GM12878 (cell line): ENCODE measurements at regions of chr12 and their contacts with region 1.

Region 1: DNA sequence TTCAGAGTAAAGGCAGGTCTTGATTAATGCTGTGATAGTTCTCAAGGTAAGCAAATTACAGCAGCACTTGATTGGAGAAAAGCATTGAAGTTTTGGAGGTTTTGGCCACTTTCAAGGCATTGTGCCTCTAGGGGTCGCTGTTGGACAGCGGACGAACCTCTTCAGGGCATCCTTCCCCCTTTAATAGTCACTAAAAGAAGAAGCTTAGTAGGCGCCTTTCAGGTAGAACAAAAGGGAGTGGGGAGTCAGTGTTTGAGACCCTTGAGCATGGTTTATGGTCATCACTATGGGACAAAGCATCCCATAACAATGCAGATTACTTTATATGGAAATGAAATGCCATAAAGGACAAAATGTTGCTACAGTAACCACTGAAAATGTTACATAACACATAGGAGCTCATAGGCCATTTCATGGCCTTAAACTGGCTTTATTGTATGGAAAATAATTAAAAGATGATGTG is 199.5 kb upstream of the DCN start:
- DNase-seq: peak; percentile 54
- ATAC-seq: peak; percentile 95
- H3K4me3 ChIP-seq: peak overlapping the region; percentile 68
- H3K27ac ChIP-seq: peak overlapping the region; percentile 37; the same call in 1 of the 2 replicates
- H3K4me1 ChIP-seq: peaks cover 3% of the 10 kb centered on the region; the same call in 1 of the 2 replicates
- H3K27me3 ChIP-seq: no peaks in the 10 kb centered on the region
- CTCF ChIP-seq: peak; percentile 80 to 89 (median 87)
- EP300 ChIP-seq: no peak
- POLR2A ChIP-seq: no peak
- RAD21 ChIP-seq: peak; percentile 92

Region 2: GRCh38 chr12:90870971-90871725 is 511.0 kb before region 1 on chr12:
- CTCF ChIA-PET with region 1: no interaction called
- POLR2A ChIA-PET with region 1: no interaction called
- RAD21 ChIA-PET with region 1: no interaction called
- SMC1A ChIA-PET with region 1: no interaction called
- in situ Hi-C with region 1: no loop called
- intact Hi-C with region 1: no loop called
- DNase-seq: no peak
- ATAC-seq: no peak
- H3K4me3 ChIP-seq: no peak overlapping the region
- H3K27ac ChIP-seq: no peak overlapping the region
- H3K4me1 ChIP-seq: no peaks in the 10 kb centered on the region
- H3K27me3 ChIP-seq: no peaks in the 10 kb centered on the region
- CTCF ChIP-seq: no peak
- EP300 ChIP-seq: no peak
- POLR2A ChIP-seq: no peak
- RAD21 ChIP-seq: no peak

Region 3: DNA sequence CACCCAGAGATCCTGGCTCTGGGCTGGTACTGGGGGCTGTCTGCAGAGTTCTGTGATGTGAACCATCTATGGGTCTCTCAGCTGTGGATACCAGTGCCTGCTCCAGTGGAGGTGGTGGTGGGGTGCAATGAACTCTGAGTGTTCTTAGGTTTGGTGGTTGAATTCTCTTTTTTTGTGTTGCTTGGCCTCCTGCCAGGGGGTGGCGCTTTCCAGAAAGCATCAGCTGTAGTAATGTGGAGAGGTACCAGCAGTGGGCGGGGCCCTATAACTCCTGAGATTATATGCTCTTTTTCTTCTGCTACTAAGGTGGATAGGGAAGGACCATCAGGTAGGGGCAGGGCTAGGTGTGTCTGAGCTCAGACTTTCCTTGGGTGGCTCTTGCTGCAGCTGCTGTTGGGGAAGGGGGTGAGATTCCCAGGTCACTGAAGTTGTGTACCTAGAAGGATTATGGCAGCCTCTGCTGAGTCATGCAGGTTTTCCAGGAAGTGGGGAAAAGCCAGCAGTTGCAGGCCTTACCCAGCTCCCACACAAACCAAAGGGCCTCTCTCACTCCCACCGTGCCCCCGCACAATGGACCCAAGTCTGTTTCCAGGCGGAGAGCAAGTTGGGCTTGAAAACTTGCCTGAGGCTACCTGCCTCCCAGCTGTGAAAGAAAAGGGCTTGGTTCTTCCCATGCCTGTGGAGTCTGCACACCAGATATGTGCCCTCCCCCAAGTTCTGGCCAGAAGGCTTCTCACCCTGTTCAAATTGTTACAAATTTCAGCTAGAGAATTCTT is 445.7 kb before region 1 on chr12:
- CTCF ChIA-PET with region 1: no interaction called
- POLR2A ChIA-PET with region 1: no interaction called
- RAD21 ChIA-PET with region 1: no interaction called
- SMC1A ChIA-PET with region 1: no interaction called
- in situ Hi-C with region 1: no loop called
- intact Hi-C with region 1: no loop called
- DNase-seq: no peak
- ATAC-seq: no peak
- H3K4me3 ChIP-seq: no peak overlapping the region
- H3K27ac ChIP-seq: no peak overlapping the region
- H3K4me1 ChIP-seq: no peaks in the 10 kb centered on the region
- H3K27me3 ChIP-seq: no peaks in the 10 kb centered on the region
- CTCF ChIP-seq: no peak
- EP300 ChIP-seq: no peak
- POLR2A ChIP-seq: no peak
- RAD21 ChIP-seq: no peak

Region 4: GRCh38 chr12:91355150-91356006 is 26.7 kb before region 1 on chr12:
- CTCF ChIA-PET with region 1: interaction called, 14 read pairs
- POLR2A ChIA-PET with region 1: no interaction called
- RAD21 ChIA-PET with region 1: interaction called, 3 read pairs
- SMC1A ChIA-PET with region 1: interaction called, 3 read pairs
- in situ Hi-C with region 1: no loop called
- intact Hi-C with region 1: no loop called
- DNase-seq: peak; percentile 3
- ATAC-seq: peak; percentile 99
- H3K4me3 ChIP-seq: no peak overlapping the region
- H3K27ac ChIP-seq: no peak overlapping the region
- H3K4me1 ChIP-seq: no peaks in the 10 kb centered on the region
- H3K27me3 ChIP-seq: no peaks in the 10 kb centered on the region
- CTCF ChIP-seq: peak; percentile 68 to 82 (median 72); a peak in 5 of 6 replicates
- EP300 ChIP-seq: no peak
- POLR2A ChIP-seq: no peak
- RAD21 ChIP-seq: peak; percentile 75

Region 5: GRCh38 chr12:91367234-91367849 is 14.8 kb before region 1 on chr12:
- CTCF ChIA-PET with region 1: interaction called, 14 read pairs
- POLR2A ChIA-PET with region 1: no interaction called
- RAD21 ChIA-PET with region 1: interaction called, 6 read pairs
- SMC1A ChIA-PET with region 1: interaction called, 3 read pairs
- in situ Hi-C with region 1: no loop called
- intact Hi-C with region 1: no loop called
- DNase-seq: no peak
- ATAC-seq: peak; percentile 68
- H3K4me3 ChIP-seq: no peak overlapping the region
- H3K27ac ChIP-seq: no peak overlapping the region
- H3K4me1 ChIP-seq: no peaks in the 10 kb centered on the region
- H3K27me3 ChIP-seq: no peaks in the 10 kb centered on the region
- CTCF ChIP-seq: peak; percentile 38 to 41 (median 40); a peak in 4 of 6 replicates
- EP300 ChIP-seq: no peak
- POLR2A ChIP-seq: no peak
- RAD21 ChIP-seq: peak; percentile 44; the same call in 1 of the 2 replicates

Region 6: DNA sequence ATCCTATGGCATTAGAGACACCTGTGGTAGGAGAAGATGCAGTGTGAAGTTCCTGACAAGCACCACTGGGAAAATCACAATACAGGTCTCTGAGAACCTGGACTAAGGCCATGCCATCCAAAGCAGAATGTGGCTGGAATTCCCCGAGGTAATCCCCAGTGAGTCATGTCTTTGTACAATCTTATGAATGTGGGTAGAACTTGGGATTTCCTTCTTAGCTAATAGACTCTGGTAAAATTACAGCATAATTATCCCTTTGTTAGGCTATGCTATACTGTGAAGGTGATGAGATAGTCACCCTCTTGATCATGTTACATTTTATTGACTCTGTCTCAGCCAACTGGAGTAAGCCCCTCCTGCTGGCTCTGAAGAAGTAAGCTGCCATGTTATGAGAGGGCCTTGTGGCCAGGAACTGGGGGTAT is 24.8 kb after region 1 on chr12:
- CTCF ChIA-PET with region 1: interaction called, 15 read pairs
- POLR2A ChIA-PET with region 1: no interaction called
- RAD21 ChIA-PET with region 1: interaction called, 4 read pairs
- SMC1A ChIA-PET with region 1: interaction called, 18 read pairs
- in situ Hi-C with region 1: no loop called
- intact Hi-C with region 1: no loop called
- DNase-seq: peak; percentile 54
- ATAC-seq: peak; percentile 92
- H3K4me3 ChIP-seq: no peak overlapping the region
- H3K27ac ChIP-seq: peak overlapping the region; percentile 24; the same call in 1 of the 2 replicates
- H3K4me1 ChIP-seq: peaks cover 8% of the 10 kb centered on the region
- H3K27me3 ChIP-seq: no peaks in the 10 kb centered on the region
- CTCF ChIP-seq: no peak
- EP300 ChIP-seq: no peak
- POLR2A ChIP-seq: no peak
- RAD21 ChIP-seq: no peak

Region 7: DNA sequence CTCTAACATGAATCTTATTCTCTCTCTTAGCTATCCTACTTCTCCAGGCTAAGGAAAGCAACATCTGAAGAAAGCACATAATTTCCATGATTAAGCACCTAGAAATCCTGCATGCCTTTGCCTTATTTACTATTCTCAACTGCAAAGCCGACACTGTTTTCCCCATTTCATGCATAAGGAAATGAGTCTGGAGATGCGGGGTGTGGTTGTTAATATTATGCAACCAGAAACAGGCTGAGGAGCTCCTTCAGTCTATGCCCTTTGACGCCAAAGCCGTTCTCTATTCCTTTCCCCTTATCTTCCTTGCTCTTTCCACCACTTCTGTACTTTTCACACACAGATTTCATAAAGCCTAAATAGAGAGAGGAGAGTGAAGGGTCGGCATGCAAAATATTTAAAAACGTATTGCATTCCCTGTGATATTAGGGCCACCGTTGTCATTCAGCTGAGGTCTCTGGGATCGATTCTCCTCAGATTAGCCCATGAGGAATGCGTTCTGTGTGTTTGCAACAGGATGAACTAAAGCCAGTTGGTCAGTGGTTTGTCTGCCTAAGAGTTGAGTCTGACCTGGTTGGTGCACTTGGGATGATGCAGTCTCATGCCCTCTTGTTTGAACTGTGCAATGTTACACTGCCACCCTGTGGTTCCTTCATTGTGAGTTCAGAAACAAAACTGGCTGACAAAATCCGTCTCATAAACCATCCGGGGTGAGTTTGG is 1267.6 kb after region 1 on chr12:
- CTCF ChIA-PET with region 1: interaction called, 43 read pairs
- POLR2A ChIA-PET with region 1: no interaction called
- RAD21 ChIA-PET with region 1: interaction called, 31 read pairs
- SMC1A ChIA-PET with region 1: interaction called, 38 read pairs
- in situ Hi-C with region 1: loop called (anchors 5 kb)
- intact Hi-C with region 1: loop called (anchors 1 kb)
- DNase-seq: peak; percentile 67
- ATAC-seq: peak; percentile 98
- H3K4me3 ChIP-seq: no peak overlapping the region
- H3K27ac ChIP-seq: no peak overlapping the region
- H3K4me1 ChIP-seq: no peaks in the 10 kb centered on the region
- H3K27me3 ChIP-seq: no peaks in the 10 kb centered on the region
- CTCF ChIP-seq: peak; percentile 72 to 85 (median 76); a peak in 5 of 6 replicates
- EP300 ChIP-seq: no peak
- POLR2A ChIP-seq: no peak
- RAD21 ChIP-seq: peak; percentile 96

Region 8: DNA sequence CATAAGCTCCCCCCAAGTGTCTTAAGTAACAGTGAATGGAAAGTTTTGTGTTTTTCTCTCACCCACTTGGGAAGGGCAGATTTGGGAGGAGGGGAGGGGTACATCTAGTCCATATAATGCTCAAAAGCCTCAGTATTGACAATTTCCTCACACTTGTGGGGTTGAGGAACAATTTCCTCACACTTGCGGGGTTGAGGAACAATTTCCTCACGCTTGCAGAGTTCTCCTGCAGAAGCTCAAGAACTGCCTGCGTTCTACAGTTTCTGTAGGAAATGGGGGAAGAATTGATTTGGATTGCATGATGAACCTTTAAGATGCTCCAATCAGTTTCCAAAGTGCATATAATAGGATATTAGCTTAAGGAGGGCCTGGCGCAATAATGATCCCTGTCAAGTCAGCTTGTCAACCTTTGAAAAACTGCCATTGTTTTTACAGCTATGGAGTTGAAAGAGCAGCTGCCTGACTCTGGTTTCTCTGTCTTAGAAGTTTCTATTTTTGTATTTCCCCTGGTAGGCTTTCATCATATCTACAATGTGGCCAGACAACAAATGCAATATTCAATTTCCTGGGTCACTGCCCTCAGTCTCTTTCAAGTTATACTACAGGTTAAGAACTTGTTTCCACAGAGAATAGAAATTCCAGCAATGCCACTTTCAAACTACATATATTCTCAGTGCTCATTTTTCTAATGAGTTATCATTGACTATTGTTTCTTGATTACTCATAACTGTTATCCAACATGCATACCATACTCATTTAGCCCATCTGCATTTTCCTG is 1387.2 kb after region 1 on chr12:
- CTCF ChIA-PET with region 1: interaction called, 10 read pairs
- POLR2A ChIA-PET with region 1: no interaction called
- RAD21 ChIA-PET with region 1: no interaction called
- SMC1A ChIA-PET with region 1: no interaction called
- in situ Hi-C with region 1: no loop called
- intact Hi-C with region 1: loop called (anchors 10 kb)
- DNase-seq: no peak
- ATAC-seq: peak; percentile 86
- H3K4me3 ChIP-seq: no peak overlapping the region
- H3K27ac ChIP-seq: peak overlapping the region; percentile 45; the same call in 1 of the 2 replicates
- H3K4me1 ChIP-seq: peaks cover 17% of the 10 kb centered on the region
- H3K27me3 ChIP-seq: no peaks in the 10 kb centered on the region
- CTCF ChIP-seq: no peak
- EP300 ChIP-seq: peak in 1 of 2 experiments; percentile 64; a peak in 2 of 4 replicates
- POLR2A ChIP-seq: no peak
- RAD21 ChIP-seq: no peak